GM12878 (cell line): ENCODE measurements at regions of chr20 and their contacts with region 1.

Region 1: DNA sequence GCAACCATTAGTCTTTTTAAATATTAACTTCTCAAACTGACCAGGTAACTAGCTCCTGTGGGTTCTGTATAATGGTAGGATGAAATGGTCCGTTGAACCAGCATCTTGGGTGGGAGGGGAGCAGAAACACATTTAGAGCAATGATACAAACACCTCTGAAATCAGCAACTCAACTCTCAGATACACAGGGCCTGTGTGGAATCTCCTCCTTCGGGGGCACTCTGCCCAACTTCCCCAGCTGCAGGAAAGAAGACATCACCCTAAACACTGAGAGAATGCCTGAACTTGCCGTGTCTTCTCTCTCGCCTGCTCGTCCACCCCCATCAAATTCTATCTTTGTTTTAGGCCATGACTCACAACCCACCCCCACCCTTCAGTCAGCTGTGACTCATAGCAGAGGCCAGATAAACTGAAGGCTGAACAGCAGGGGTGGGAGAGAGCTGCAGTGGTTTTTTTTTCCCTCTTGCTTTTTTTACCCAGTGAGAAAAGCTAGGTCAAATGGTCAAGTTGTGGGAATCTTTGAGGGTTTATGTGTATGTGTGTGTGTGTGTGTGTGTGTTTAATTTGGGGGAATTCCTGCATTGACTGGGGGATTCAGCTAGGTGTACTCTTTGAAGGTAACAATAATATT is 593.4 kb upstream of the JAG1 start:
- DNase-seq: peak; percentile 79
- ATAC-seq: peak; percentile 93
- H3K4me3 ChIP-seq: no peak overlapping the region
- H3K27ac ChIP-seq: peak overlapping the region; percentile 37; the same call in 1 of the 2 replicates
- H3K4me1 ChIP-seq: peaks cover 15% of the 10 kb centered on the region
- H3K27me3 ChIP-seq: no peaks in the 10 kb centered on the region
- CTCF ChIP-seq: no peak
- EP300 ChIP-seq: peak; percentile 71 to 83
- POLR2A ChIP-seq: no peak
- RAD21 ChIP-seq: peak; percentile 45; the same call in 1 of the 2 replicates

Region 2: GRCh38 chr20:11128220-11128718 is 139.0 kb before region 1 on chr20:
- CTCF ChIA-PET with region 1: no interaction called
- POLR2A ChIA-PET with region 1: no interaction called
- RAD21 ChIA-PET with region 1: interaction called, 6 read pairs
- SMC1A ChIA-PET with region 1: interaction called, 7 read pairs
- in situ Hi-C with region 1: no loop called
- intact Hi-C with region 1: loop called (anchors 5 kb)
- DNase-seq: no peak
- ATAC-seq: no peak
- H3K4me3 ChIP-seq: no peak overlapping the region
- H3K27ac ChIP-seq: no peak overlapping the region
- H3K4me1 ChIP-seq: no peaks in the 10 kb centered on the region
- H3K27me3 ChIP-seq: no peaks in the 10 kb centered on the region
- CTCF ChIP-seq: no peak
- EP300 ChIP-seq: no peak
- POLR2A ChIP-seq: no peak
- RAD21 ChIP-seq: no peak

Region 3: DNA sequence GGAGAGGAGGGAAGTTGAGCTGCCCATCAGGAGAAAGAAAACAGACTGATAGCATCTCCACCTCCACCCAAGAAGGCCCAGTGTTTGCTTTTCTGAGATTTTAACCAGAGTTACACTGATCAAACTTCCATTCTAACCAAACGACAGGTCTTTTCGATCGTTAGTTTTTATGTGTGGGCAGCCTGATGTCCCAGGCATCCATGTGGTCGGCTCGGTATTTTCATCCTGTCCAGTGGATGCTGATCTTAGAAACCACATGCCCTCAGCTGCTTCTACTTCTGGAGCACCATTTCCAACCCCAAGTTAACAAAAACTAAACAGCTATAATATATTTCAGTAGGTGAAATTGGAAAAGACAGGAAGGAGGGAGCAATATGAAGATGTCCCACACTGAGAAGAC is 56.6 kb before region 1 on chr20:
- CTCF ChIA-PET with region 1: interaction called, 21 read pairs
- POLR2A ChIA-PET with region 1: interaction called, 4 read pairs
- RAD21 ChIA-PET with region 1: interaction called, 39 read pairs
- SMC1A ChIA-PET with region 1: interaction called, 57 read pairs
- in situ Hi-C with region 1: no loop called
- intact Hi-C with region 1: loop called (anchors 2 kb)
- DNase-seq: no peak
- ATAC-seq: no peak
- H3K4me3 ChIP-seq: no peak overlapping the region
- H3K27ac ChIP-seq: no peak overlapping the region
- H3K4me1 ChIP-seq: no peaks in the 10 kb centered on the region
- H3K27me3 ChIP-seq: no peaks in the 10 kb centered on the region; a peak in 1 of 4 replicates
- CTCF ChIP-seq: no peak
- EP300 ChIP-seq: no peak
- POLR2A ChIP-seq: no peak
- RAD21 ChIP-seq: no peak

Region 4: GRCh38 chr20:11222243-11222642 is 45.0 kb before region 1 on chr20:
- CTCF ChIA-PET with region 1: interaction called, 16 read pairs
- POLR2A ChIA-PET with region 1: interaction called, 4 read pairs
- RAD21 ChIA-PET with region 1: interaction called, 39 read pairs
- SMC1A ChIA-PET with region 1: interaction called, 57 read pairs
- in situ Hi-C with region 1: no loop called
- intact Hi-C with region 1: no loop called
- DNase-seq: no peak
- ATAC-seq: peak; percentile 47
- H3K4me3 ChIP-seq: no peak overlapping the region
- H3K27ac ChIP-seq: no peak overlapping the region
- H3K4me1 ChIP-seq: peaks cover 13% of the 10 kb centered on the region
- H3K27me3 ChIP-seq: no peaks in the 10 kb centered on the region
- CTCF ChIP-seq: no peak
- EP300 ChIP-seq: peak in 1 of 2 experiments; percentile 32; a peak in 1 of 4 replicates
- POLR2A ChIP-seq: no peak
- RAD21 ChIP-seq: no peak

Region 5: DNA sequence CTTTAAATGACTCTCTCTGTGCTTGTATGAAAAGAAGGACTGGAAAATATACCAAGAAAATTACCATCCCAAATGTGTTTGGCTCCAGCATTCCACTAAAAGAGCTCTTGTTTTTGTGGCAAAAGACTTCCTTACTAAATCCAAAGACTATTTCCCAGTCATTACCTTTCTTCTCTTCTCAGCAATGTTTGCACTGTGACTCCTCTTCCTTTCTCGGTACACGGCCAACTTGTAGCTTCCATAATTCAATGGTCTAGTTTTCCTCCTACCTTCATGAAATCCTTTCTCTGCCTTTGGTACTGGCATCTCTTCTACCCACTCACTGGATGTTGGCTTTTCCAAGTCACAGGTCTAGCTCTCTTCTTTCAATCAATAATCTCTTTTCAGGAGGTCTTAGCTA is 24.9 kb before region 1 on chr20:
- CTCF ChIA-PET with region 1: interaction called, 42 read pairs
- POLR2A ChIA-PET with region 1: interaction called, 3 read pairs
- RAD21 ChIA-PET with region 1: interaction called, 22 read pairs
- SMC1A ChIA-PET with region 1: interaction called, 35 read pairs
- in situ Hi-C with region 1: no loop called
- intact Hi-C with region 1: no loop called
- DNase-seq: no peak
- ATAC-seq: no peak
- H3K4me3 ChIP-seq: no peak overlapping the region
- H3K27ac ChIP-seq: no peak overlapping the region
- H3K4me1 ChIP-seq: no peaks in the 10 kb centered on the region
- H3K27me3 ChIP-seq: no peaks in the 10 kb centered on the region; a peak in 2 of 4 replicates
- CTCF ChIP-seq: no peak
- EP300 ChIP-seq: no peak
- POLR2A ChIP-seq: no peak
- RAD21 ChIP-seq: no peak

Region 6: DNA sequence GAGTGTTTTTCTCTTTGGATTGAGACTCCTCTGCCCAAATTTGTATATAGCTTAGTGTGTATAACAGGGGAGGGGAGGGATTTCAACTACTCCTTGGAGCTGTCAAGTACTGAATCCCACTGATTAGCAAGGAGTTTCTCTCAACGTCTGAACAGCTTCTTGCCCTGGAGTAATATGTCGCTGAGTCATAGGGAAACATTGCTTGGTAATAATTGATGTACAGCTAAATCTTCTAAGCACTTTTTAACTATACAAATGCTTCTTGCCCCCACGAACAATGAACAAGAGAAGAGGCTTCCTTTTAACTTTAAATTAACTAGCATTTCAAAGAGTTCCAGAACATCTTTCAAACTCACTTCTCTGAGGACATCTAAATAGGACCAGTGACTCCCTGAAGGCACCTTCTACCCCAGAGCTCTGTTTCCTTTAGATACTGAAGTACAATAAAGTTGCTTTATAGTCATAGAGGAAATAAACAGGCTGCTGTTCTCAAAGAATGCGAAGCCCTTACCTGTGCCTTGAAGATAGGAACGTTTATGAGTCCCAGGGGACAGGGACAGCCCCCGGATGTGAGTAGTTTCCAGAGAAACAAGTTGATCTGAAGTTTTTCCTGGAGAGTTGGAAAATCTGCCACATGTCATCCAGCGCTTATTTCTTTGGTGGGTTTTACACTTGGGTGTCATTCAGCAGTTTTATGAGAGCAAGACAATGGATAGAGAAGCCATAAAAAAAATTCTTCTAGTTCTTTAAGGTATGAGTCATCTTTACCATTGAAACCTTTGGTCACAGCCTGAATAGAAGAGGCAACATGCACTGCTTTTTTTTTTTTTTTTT is 187.9 kb after region 1 on chr20:
- CTCF ChIA-PET with region 1: interaction called, 3 read pairs
- POLR2A ChIA-PET with region 1: interaction called, 3 read pairs
- RAD21 ChIA-PET with region 1: interaction called, 13 read pairs
- SMC1A ChIA-PET with region 1: interaction called, 15 read pairs
- in situ Hi-C with region 1: no loop called
- intact Hi-C with region 1: no loop called
- DNase-seq: no peak
- ATAC-seq: peak; percentile 66
- H3K4me3 ChIP-seq: no peak overlapping the region
- H3K27ac ChIP-seq: no peak overlapping the region
- H3K4me1 ChIP-seq: no peaks in the 10 kb centered on the region
- H3K27me3 ChIP-seq: no peaks in the 10 kb centered on the region
- CTCF ChIP-seq: no peak
- EP300 ChIP-seq: peak in 1 of 2 experiments; percentile 62; a peak in 1 of 4 replicates
- POLR2A ChIP-seq: no peak
- RAD21 ChIP-seq: no peak